ENCODE measurements at regions of chr12 and their contacts with region 1.

Region 1: GRCh38 chr12:54005853-54006686 is 2.7 kb upstream of the HOXC8 start:
- DNase-seq: peak; percentile 85
- H3K4me3 Mint-ChIP-seq: peak overlapping the region; percentile 66
- H3K27ac Mint-ChIP-seq: no peak overlapping the region
- H3K4me1 Mint-ChIP-seq: peaks cover 25% of the 10 kb centered on the region
- H3K27me3 Mint-ChIP-seq: peaks cover 95% of the 10 kb centered on the region

Region 2: GRCh38 chr12:53820516-53821306 is 185.4 kb before region 1 on chr12:
- CTCF ChIA-PET with region 1: no interaction called
- POLR2A ChIA-PET with region 1: no interaction called
- DNase-seq: no peak
- H3K4me3 Mint-ChIP-seq: no peak overlapping the region
- H3K27ac Mint-ChIP-seq: no peak overlapping the region
- H3K4me1 Mint-ChIP-seq: no peaks in the 10 kb centered on the region
- H3K27me3 Mint-ChIP-seq: peaks cover 49% of the 10 kb centered on the region

Region 3: DNA sequence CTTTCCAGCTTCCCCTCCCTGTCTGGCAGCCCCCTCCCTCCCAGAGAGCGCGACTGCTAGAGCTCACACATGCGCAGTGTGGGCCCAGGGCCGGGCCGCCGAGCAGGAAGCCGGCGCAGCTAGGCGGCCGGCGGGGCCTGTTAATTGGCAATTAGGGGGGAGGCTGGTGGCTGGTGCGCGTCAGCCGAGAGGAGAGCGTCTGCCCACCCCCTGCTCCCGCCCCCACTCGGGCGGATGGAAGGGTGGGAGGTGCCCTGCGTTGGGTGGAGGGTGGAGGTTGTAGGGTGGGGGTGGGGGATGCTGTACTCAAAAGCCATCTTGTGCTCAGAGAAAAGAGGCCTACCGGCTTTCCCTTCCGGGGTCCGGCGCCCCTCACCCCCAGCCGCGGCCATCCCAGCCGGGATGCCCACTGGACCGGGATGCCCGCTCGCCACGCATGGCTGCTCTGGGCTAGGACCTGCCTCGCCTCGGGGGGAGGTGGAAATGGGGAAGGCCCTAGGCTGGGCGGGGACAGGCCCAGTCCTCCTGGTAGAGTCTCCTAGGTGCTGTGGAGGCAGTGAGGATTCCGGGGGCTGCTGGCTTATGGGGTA is 11.9 kb after region 1 on chr12:
- CTCF ChIA-PET with region 1: interaction called, 11 read pairs
- POLR2A ChIA-PET with region 1: interaction called, 4 read pairs
- DNase-seq: peak; percentile 74
- H3K4me3 Mint-ChIP-seq: peak overlapping the region; percentile 73
- H3K27ac Mint-ChIP-seq: no peak overlapping the region
- H3K4me1 Mint-ChIP-seq: peaks cover 23% of the 10 kb centered on the region
- H3K27me3 Mint-ChIP-seq: peaks cover 71% of the 10 kb centered on the region